AG04450 (cell line): ENCODE measurements at regions of chr2 and their contacts with region 1.

Region 1: DNA sequence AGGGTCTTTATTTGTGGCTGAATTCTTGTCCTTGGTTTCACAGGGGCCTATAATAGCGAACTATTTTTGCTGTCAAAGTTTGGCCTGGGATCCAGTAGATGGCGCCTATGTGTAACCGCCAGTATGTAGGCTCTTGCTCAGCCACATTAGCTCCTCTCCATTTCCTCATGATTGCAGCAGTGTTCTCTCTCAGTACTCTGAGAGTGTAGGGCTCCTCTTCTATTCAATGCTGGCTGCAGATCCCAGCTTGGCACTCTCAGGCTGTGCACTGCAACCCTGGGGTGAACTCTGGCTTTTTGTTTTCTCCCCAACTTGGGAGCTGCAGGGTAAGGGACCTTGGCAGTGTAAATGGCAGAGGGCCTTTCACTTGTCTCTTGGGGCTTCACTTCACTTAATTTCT is 344.6 kb upstream of the CHAC2 start:
- DNase-seq: no peak
- H3K4me3 ChIP-seq: no peak overlapping the region
- H3K27ac ChIP-seq: no peak overlapping the region
- H3K27me3 ChIP-seq: no peaks in the 10 kb centered on the region
- CTCF ChIP-seq: peak; percentile 69

Region 2: GRCh38 chr2:53740170-53740569 is 317.2 kb after region 1 on chr2:
- CTCF ChIA-PET with region 1: interaction called, 16 read pairs
- POLR2A ChIA-PET with region 1: no interaction called
- DNase-seq: peak; percentile 11
- H3K4me3 ChIP-seq: no peak overlapping the region
- H3K27ac ChIP-seq: no peak overlapping the region
- H3K27me3 ChIP-seq: no peaks in the 10 kb centered on the region
- CTCF ChIP-seq: peak; percentile 59